ENCODE measurements at regions of chr14 and their contacts with region 1.

Region 1: DNA sequence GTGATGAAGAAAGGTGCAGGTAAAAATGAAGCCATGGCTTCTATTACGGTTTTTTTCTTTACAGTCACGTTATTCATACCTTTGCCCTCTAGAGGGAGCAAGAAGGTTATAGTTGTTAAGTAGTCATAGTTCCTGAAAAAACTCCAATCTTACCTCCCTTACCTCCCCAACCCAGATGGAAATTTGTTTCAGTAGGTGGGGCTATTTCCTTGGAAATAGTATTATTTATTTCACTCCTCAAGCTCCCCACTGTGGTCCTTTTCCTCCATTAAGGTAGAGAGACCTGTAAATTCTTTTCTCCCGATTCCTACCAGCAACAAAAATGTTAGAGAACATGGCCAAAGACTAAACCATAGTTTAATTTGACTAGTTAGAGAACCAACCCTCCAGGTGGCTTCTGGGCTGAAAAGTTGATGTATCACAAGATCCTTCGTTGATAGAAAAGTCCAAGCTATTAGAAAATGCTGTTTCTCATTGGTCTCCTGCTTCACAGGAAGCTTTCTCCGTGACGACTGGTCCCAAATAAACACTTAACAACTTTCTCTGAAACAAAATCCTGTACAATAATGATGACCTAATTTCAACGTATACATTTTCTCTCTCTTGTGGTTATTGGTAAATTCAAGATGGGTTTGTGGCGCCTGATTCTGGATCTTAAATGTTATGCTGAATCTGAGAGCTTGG is 43.5 kb downstream of the TMX1 start:
- DNase-seq: peak; percentile 78 to 81
- ATAC-seq: peak; percentile 86 to 93
- H3K4me3 ChIP-seq: no peak overlapping the region
- H3K27ac ChIP-seq: no peak overlapping the region
- H3K4me1 ChIP-seq: no peaks in the 10 kb centered on the region
- CTCF ChIP-seq: peak; percentile 96
- EP300 ChIP-seq: no peak
- POLR2A ChIP-seq: no peak
- RAD21 ChIP-seq: peak; percentile 94 to 97

Region 2: DNA sequence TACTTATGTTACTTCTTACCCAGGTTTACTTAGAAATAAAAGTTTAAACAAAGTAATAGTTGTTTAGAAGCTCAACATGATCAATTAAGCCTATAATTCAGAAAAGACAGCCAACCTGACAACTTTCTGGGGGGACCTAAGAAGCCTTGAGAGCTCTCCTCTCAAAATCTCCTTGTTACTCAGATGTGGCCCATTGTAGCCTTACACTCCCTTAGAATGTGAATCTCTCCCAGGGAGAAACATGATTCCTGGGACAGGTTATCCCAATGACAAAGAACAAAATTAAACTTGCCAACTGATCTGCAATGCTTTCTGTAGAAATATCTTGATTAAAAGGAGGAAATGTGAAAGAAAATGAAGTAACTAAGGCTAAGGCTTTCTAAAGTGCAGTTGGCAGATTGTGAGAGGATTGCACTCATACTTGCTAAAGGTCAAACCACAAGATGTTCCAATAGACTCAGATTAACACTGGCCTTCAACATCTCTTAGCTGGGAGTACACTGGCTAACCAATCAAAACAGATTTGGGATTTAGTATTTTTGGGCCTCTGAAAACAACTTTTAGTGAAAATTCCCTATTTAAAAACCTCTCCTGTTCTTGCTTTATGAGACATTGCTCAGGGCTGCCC is 115.8 kb before region 1 on chr14:
- CTCF ChIA-PET with region 1: no interaction called
- POLR2A ChIA-PET with region 1: no interaction called
- DNase-seq: no peak
- ATAC-seq: no peak
- H3K4me3 ChIP-seq: no peak overlapping the region
- H3K27ac ChIP-seq: no peak overlapping the region
- H3K4me1 ChIP-seq: 0 out of 3 replicates have a peak, but pooled peaks cover 4% of the 10 kb centered on the region
- CTCF ChIP-seq: no peak
- EP300 ChIP-seq: no peak
- POLR2A ChIP-seq: no peak
- RAD21 ChIP-seq: no peak

Region 3: DNA sequence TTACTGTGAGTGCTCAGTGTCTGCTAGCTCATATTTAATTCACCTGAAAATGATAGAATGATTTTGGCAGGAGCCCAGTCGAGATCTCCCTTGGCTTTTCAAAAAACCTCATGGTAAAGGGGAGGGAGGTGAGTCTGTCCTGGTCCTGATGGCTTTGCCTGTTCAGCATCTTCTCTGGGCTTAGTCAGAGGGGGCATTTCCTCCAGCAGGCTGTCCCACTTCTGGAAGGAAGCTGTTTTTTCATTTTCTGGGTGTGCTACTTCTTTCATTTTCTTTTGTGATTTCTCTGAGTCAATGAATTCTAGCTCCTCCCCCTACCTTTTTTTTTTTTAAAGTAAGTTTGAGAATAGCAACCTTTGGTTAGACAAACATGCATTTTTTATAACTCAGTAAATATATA is 15.4 kb after region 1 on chr14:
- CTCF ChIA-PET with region 1: interaction called, 35 read pairs
- POLR2A ChIA-PET with region 1: no interaction called
- DNase-seq: no peak
- ATAC-seq: no peak
- H3K4me3 ChIP-seq: no peak overlapping the region
- H3K27ac ChIP-seq: no peak overlapping the region
- H3K4me1 ChIP-seq: peaks cover 6% of the 10 kb centered on the region; the same call in 1 of the 3 replicates
- CTCF ChIP-seq: no peak
- EP300 ChIP-seq: no peak
- POLR2A ChIP-seq: no peak
- RAD21 ChIP-seq: no peak

Region 4: GRCh38 chr14:51539571-51540037 is 256.1 kb after region 1 on chr14:
- CTCF ChIA-PET with region 1: interaction called, 14 read pairs
- POLR2A ChIA-PET with region 1: no interaction called
- DNase-seq: peak; percentile 29 to 59
- ATAC-seq: peak; percentile 81 to 84
- H3K4me3 ChIP-seq: no peak overlapping the region
- H3K27ac ChIP-seq: peak overlapping the region; percentile 66 to 69
- H3K4me1 ChIP-seq: peaks cover 24% of the 10 kb centered on the region
- CTCF ChIP-seq: no peak
- EP300 ChIP-seq: no peak
- POLR2A ChIP-seq: no peak
- RAD21 ChIP-seq: peak in 1 of 2 experiments; percentile 26; a peak in 2 of 5 replicates

Region 5: GRCh38 chr14:51657762-51658161 is 374.2 kb after region 1 on chr14:
- CTCF ChIA-PET with region 1: interaction called, 46 read pairs
- POLR2A ChIA-PET with region 1: no interaction called
- DNase-seq: no peak
- ATAC-seq: no peak
- H3K4me3 ChIP-seq: no peak overlapping the region
- H3K27ac ChIP-seq: no peak overlapping the region
- H3K4me1 ChIP-seq: peaks cover 38% of the 10 kb centered on the region
- CTCF ChIP-seq: no peak
- EP300 ChIP-seq: no peak
- POLR2A ChIP-seq: no peak
- RAD21 ChIP-seq: no peak

Region 6: GRCh38 chr14:51704545-51704944 is 421.0 kb after region 1 on chr14:
- CTCF ChIA-PET with region 1: interaction called, 11 read pairs
- POLR2A ChIA-PET with region 1: no interaction called
- DNase-seq: no peak
- ATAC-seq: no peak
- H3K4me3 ChIP-seq: no peak overlapping the region
- H3K27ac ChIP-seq: no peak overlapping the region
- H3K4me1 ChIP-seq: peaks cover 6% of the 10 kb centered on the region; the same call in 1 of the 3 replicates
- CTCF ChIP-seq: no peak
- EP300 ChIP-seq: no peak
- POLR2A ChIP-seq: no peak
- RAD21 ChIP-seq: no peak

Measured in A549 (cell line).